Activated CD8-positive, alpha-beta T cell treated with anti-CD3 and anti-CD28 coated beads, Interleukin-2, amount 10 ng/mL, durations not matched to agents 7 days and 5 days (primary cell): ENCODE measurements at regions of chr9 and their contacts with region 1.

Region 1: GRCh38 chr9:105359892-105360291 is 87.9 kb upstream of the FSD1L start:
- DNase-seq: peak; percentile 72
- ATAC-seq: peak; percentile 82
- H3K4me3 Mint-ChIP-seq: no peak overlapping the region
- H3K27ac Mint-ChIP-seq: no peak overlapping the region
- H3K4me1 Mint-ChIP-seq: peaks cover 35% of the 10 kb centered on the region
- H3K27me3 Mint-ChIP-seq: peaks cover 7% of the 10 kb centered on the region

Region 2: DNA sequence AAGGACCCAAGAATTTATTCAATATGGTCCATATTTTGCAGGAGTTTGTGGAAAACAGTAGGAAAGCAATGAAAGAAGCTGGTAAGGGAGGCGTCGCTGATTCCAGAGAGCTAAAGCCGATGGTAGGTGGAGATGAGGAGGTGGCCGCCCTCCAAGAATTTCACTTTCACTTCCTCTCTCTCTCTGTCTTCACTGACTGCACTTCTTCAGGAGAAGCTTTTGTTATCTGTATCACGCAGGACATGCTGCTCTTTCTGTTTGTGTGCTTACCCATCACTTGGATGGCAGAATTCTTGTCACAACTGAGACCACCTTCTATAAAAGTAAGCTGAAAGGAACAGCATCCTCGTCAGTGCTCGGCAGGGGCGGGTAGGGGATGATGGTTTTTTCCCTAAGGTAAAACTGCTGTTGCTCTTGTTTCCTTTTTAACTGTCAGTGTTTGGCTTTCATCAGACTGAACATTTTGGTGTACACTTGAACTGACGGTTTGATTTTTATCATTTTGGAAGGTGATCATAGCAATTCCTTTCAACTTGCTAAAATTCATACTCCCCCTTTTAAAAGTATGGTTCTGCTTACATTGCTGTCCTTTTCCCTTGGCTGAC is 25.6 kb after region 1 on chr9:
- CTCF ChIA-PET with region 1: interaction called, 12 read pairs
- POLR2A ChIA-PET with region 1: no interaction called
- DNase-seq: peak; percentile 64
- ATAC-seq: peak; percentile 99
- H3K4me3 Mint-ChIP-seq: peak overlapping the region; percentile 87
- H3K27ac Mint-ChIP-seq: peak overlapping the region; percentile 93
- H3K4me1 Mint-ChIP-seq: peaks cover 31% of the 10 kb centered on the region
- H3K27me3 Mint-ChIP-seq: peaks cover 2% of the 10 kb centered on the region